ENCODE measurements at regions of chr12 and their contacts with region 1.

Region 1: DNA sequence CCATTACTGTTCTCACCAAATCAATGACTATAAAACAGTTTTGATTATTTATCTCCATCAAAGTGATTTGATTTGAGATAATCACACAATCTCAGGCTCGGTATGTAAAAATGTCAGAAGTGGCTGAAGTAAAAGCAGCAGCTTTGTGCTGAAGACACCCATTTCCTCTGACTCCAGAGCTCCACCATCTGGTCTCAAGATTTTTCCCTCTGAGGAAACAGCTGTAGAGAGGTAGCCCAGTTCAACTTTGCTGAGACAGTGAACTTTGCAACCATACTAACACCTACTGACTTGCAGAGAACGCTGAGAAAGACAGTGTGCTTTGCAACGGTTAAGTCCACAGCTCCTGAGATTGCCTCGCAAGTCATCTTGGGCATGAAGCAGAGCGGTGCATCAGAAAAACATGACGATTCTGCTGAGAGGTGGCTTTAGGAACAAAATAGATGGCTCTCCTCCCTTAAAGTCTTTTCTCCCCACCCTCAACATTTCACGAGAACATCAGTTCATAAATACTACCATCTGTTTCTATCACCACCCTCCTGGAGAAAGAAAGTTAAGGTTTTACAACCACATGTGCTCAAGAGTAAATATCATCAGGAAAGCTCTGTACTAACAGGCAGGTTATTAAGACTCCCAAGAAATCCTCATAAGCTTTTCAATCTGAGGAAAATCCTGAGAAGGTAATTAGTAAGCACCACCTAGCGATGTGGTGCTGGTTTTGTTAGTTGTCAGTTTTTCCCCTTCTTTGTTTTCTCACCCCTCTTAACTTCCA is 34.8 kb downstream of the HIGD1C start:
- DNase-seq: peak; percentile 77
- H3K4me3 ChIP-seq: no peak overlapping the region
- H3K27ac ChIP-seq: peak overlapping the region; percentile 35
- H3K4me1 ChIP-seq: no peaks in the 10 kb centered on the region
- H3K27me3 ChIP-seq: no peaks in the 10 kb centered on the region
- CTCF ChIP-seq: peak; percentile 46

Region 2: DNA sequence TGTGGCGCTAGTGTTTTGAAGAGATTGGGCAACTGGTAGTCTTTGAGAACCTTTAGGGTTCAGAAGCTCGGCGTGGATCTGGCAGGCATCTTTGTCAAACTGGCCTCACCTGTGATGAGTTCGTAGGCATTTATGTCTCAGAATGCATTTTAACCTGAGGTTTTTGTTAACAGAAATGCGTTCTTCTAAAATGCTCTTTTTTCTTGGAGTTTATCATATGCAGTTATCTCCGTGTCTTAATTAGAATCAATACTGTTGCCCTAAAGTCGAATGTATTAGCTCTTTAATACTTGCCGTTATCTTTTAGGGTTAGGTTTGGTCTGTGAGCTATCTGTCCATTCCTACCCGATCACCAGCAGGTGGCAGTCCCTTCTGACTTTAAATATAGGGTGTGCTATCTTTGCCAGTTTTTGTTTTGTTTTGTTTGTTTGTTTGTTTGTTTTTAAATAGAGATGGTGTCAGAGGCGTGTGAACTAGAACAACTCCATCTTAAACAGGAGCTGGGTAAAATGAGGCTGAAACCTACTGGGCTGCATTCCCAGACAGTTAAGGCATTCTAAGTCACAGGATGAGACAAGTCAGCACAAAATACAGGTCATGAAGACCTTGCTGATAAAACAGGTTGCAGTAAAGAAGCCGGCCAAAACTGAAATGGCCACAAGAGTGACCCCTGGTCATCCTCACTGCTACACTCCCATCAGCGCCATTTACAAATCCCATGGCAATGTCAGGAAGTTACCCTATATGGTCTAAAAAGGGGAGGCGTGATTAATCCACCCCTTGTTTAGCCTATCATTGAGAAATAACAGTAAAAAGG is 221.8 kb before region 1 on chr12:
- intact Hi-C with region 1: loop called (anchors 5 kb)
- DNase-seq: peak; percentile 58
- H3K4me3 ChIP-seq: peak overlapping the region; percentile 91
- H3K27ac ChIP-seq: peak overlapping the region; percentile 80
- H3K4me1 ChIP-seq: no peaks in the 10 kb centered on the region
- H3K27me3 ChIP-seq: no peaks in the 10 kb centered on the region
- CTCF ChIP-seq: peak; percentile 74

Region 3: GRCh38 chr12:50825372-50825838 is 161.7 kb before region 1 on chr12:
- intact Hi-C with region 1: loop called (anchors 2 kb)
- DNase-seq: no peak
- H3K4me3 ChIP-seq: no peak overlapping the region
- H3K27ac ChIP-seq: no peak overlapping the region
- H3K4me1 ChIP-seq: no peaks in the 10 kb centered on the region
- H3K27me3 ChIP-seq: no peaks in the 10 kb centered on the region
- CTCF ChIP-seq: peak; percentile 45

Region 4: GRCh38 chr12:50924439-50925341 is 62.5 kb before region 1 on chr12:
- intact Hi-C with region 1: loop called (anchors 5 kb)
- DNase-seq: peak; percentile 97
- H3K4me3 ChIP-seq: peak overlapping the region; percentile 56
- H3K27ac ChIP-seq: peak overlapping the region; percentile 92
- H3K4me1 ChIP-seq: peaks cover 7% of the 10 kb centered on the region
- H3K27me3 ChIP-seq: no peaks in the 10 kb centered on the region
- CTCF ChIP-seq: no peak

Region 5: DNA sequence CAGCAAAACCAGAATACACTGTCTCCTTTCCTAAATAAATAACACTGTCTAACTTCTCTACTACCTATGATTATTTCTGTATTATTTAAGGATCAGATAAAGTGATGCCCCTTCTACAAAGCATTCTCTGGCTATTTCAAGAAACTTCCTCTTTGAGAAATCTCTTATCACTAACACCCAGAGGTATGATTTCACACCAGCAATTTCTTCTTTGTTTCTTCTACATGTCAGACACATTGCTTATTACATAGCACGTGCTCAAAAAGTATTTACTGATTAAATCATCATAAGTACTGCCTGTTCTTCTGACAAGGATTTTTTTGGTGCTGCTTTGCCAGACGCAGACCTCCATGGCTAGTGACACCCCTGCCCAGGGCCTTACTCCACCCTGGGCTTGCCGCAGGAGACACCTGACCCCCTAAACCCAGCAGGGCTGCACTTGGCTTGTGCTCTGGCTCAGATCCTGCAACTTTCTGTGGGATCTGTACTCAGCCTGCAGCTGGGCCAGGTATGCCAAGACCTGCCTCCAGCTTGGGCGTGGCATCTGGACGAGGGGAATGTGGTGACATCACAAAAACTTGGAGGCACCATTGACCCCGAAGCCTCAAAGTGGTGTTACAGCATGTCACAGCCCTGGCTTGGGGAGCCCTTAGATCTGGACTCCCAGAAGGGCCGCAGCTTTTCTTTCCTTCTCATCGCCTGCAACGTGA is 50.2 kb before region 1 on chr12:
- intact Hi-C with region 1: no loop called
- DNase-seq: no peak
- H3K4me3 ChIP-seq: no peak overlapping the region
- H3K27ac ChIP-seq: no peak overlapping the region
- H3K4me1 ChIP-seq: peaks cover 10% of the 10 kb centered on the region
- H3K27me3 ChIP-seq: no peaks in the 10 kb centered on the region
- CTCF ChIP-seq: no peak

Measured in colonic mucosa (tissue), 4 donors.